AG04450 (cell line): ENCODE measurements at regions of chr3 and their contacts with region 1.

Region 1: GRCh38 chr3:167684388-167684993 is 30.7 kb upstream of the WDR49 start:
- DNase-seq: peak; percentile 24
- H3K4me3 ChIP-seq: no peak overlapping the region
- H3K27ac ChIP-seq: no peak overlapping the region
- H3K27me3 ChIP-seq: no peaks in the 10 kb centered on the region
- CTCF ChIP-seq: peak; percentile 62

Region 2: DNA sequence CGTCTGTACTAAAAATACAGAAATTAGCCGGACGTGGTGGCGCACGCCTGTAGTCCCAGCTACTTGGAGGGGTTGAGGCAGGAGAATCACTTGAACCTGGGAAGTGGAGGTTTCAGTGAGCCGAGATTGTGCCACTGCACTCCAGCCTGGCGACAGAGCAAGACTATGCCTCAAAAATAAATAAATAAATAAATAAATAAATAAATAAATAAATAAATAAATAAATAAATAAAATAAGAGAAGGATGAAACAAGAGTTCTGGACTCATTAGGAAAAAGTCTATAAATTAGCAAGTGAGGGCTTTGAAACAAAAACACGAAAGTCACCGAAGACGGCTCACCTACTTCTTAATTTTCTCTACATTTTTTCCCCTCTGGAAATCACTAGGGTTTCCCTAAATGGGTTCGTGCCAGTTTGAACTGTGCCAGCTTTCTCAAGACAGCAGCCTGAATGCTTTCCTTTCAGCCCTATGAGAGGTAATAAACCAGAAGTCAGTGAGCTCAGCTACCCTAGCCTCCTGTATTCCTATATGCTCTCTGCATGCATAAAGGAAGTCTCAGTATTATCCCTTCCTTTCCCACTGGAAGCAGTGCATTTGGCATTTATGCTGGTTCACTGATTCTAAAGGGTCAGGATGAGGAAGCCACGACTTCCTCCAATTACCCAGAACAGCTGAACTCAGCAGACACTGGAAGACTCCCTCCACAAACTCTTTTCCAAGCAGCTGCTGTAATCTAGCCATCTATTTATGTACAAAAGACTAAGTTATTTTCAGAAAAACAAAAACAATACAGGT is 571.3 kb before region 1 on chr3:
- CTCF ChIA-PET with region 1: no interaction called
- POLR2A ChIA-PET with region 1: no interaction called
- DNase-seq: no peak
- H3K4me3 ChIP-seq: no peak overlapping the region
- H3K27ac ChIP-seq: no peak overlapping the region
- H3K27me3 ChIP-seq: no peaks in the 10 kb centered on the region
- CTCF ChIP-seq: no peak

Region 3: GRCh38 chr3:167669699-167670098 is 14.8 kb before region 1 on chr3:
- CTCF ChIA-PET with region 1: interaction called, 22 read pairs
- POLR2A ChIA-PET with region 1: no interaction called
- DNase-seq: no peak
- H3K4me3 ChIP-seq: no peak overlapping the region
- H3K27ac ChIP-seq: no peak overlapping the region
- H3K27me3 ChIP-seq: no peaks in the 10 kb centered on the region
- CTCF ChIP-seq: no peak

Region 4: DNA sequence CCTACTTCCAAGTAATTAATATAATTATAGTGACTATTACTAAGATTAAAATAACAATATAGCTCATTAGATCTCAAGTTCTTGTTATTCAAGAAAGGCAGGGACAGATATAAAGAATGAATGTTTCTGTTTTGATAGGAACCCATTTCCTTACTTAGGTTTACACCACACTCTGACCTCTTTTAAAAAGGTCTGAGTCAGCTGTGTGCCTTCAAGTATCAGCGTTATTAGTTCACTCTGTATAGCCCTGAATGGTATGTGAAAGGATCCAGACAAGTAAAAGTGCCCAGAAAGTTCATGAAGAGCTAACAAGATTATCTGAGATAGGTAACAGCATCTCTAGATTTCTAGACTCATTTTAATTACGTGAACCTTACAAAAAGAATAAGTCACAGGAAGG is 21.3 kb after region 1 on chr3:
- CTCF ChIA-PET with region 1: interaction called, 31 read pairs
- POLR2A ChIA-PET with region 1: no interaction called
- DNase-seq: no peak
- H3K4me3 ChIP-seq: no peak overlapping the region
- H3K27ac ChIP-seq: no peak overlapping the region
- H3K27me3 ChIP-seq: no peaks in the 10 kb centered on the region
- CTCF ChIP-seq: no peak

Region 5: DNA sequence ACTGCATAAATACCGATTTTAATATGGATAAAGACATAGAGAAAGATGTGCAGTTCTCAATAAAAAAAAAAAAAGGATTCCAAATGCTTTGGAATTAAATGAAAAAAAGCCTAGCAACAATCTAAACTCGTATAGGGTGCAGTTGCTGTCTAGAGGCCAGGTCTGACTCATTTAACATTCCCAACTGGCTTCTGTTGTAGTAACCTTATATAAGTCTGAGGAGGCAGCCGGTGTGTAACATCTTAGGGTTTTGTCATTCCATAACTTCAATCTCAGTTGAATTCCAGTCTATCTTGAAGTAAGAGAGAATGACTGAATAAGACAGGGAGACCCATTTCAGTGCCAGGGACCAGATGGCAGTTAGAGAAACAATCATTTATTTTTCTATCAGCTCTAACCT is 43.7 kb after region 1 on chr3:
- CTCF ChIA-PET with region 1: interaction called, 16 read pairs
- POLR2A ChIA-PET with region 1: no interaction called
- DNase-seq: peak; percentile 42
- H3K4me3 ChIP-seq: no peak overlapping the region
- H3K27ac ChIP-seq: no peak overlapping the region
- H3K27me3 ChIP-seq: no peaks in the 10 kb centered on the region
- CTCF ChIP-seq: no peak

Region 6: GRCh38 chr3:167882067-167882667 is 197.7 kb after region 1 on chr3:
- CTCF ChIA-PET with region 1: interaction called, 12 read pairs
- POLR2A ChIA-PET with region 1: no interaction called
- DNase-seq: peak; percentile 3
- H3K4me3 ChIP-seq: no peak overlapping the region
- H3K27ac ChIP-seq: no peak overlapping the region
- H3K27me3 ChIP-seq: no peaks in the 10 kb centered on the region
- CTCF ChIP-seq: peak; percentile 70